ENCODE measurements at regions of chr19 and their contacts with region 1.

Region 1: GRCh38 chr19:20863176-20863575 is 59.9 kb upstream of the ZNF85 start:
- DNase-seq: no peak
- H3K4me3 ChIP-seq: no peak overlapping the region
- H3K27ac ChIP-seq: no peak overlapping the region
- H3K4me1 ChIP-seq: no peaks in the 10 kb centered on the region
- H3K27me3 ChIP-seq: no peaks in the 10 kb centered on the region
- CTCF ChIP-seq: no peak

Region 2: GRCh38 chr19:20787766-20788165 is 75.4 kb before region 1 on chr19:
- dilution Hi-C with region 1: no loop called
- DNase-seq: no peak
- H3K4me3 ChIP-seq: no peak overlapping the region
- H3K27ac ChIP-seq: no peak overlapping the region
- H3K4me1 ChIP-seq: no peaks in the 10 kb centered on the region
- H3K27me3 ChIP-seq: no peaks in the 10 kb centered on the region
- CTCF ChIP-seq: no peak

Region 3: GRCh38 chr19:20912973-20913372 is 49.8 kb after region 1 on chr19:
- dilution Hi-C with region 1: no loop called
- DNase-seq: no peak
- H3K4me3 ChIP-seq: no peak overlapping the region
- H3K27ac ChIP-seq: no peak overlapping the region
- H3K4me1 ChIP-seq: no peaks in the 10 kb centered on the region
- H3K27me3 ChIP-seq: no peaks in the 10 kb centered on the region
- CTCF ChIP-seq: no peak

Region 4: DNA sequence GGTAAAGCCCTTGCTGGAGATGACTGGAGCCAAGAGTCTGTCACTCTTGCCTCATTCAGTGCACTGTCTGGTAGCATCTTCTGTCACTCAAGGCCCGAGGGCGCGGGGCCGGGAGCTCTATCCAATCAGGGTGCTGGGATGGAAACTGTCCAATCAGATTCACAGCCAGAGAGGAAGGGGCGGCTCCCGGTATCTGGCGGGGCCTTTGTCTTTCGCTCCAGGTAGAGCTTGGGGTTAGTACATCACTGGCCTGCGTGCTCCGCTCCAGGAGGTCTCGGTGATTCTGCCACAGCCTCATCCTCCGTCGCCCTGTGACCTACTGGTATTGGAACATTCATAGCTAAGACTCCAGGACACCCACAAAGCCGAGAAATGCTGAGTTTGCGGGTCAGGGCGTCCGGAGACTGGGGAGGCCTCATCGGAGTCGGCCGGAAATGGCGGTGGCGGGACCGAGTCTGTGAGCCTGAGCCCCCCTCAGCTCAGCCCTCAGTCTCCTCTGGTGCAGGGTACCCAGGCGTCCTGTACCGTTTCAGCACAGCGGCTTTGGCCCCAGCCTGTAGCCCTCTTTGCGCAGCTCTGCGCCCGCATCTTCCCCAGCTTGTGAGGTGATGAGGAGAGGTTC is 136.7 kb after region 1 on chr19:
- dilution Hi-C with region 1: loop called (anchors 25 kb)
- DNase-seq: peak; percentile 46
- H3K4me3 ChIP-seq: peak overlapping the region; percentile 29 to 71 (median 49)
- H3K27ac ChIP-seq: no peak overlapping the region
- H3K4me1 ChIP-seq: no peaks in the 10 kb centered on the region
- H3K27me3 ChIP-seq: no peaks in the 10 kb centered on the region
- CTCF ChIP-seq: no peak

Measured in keratinocyte (primary cell).